ENCODE measurements at regions of chr18 and their contacts with region 1.

Region 1: DNA sequence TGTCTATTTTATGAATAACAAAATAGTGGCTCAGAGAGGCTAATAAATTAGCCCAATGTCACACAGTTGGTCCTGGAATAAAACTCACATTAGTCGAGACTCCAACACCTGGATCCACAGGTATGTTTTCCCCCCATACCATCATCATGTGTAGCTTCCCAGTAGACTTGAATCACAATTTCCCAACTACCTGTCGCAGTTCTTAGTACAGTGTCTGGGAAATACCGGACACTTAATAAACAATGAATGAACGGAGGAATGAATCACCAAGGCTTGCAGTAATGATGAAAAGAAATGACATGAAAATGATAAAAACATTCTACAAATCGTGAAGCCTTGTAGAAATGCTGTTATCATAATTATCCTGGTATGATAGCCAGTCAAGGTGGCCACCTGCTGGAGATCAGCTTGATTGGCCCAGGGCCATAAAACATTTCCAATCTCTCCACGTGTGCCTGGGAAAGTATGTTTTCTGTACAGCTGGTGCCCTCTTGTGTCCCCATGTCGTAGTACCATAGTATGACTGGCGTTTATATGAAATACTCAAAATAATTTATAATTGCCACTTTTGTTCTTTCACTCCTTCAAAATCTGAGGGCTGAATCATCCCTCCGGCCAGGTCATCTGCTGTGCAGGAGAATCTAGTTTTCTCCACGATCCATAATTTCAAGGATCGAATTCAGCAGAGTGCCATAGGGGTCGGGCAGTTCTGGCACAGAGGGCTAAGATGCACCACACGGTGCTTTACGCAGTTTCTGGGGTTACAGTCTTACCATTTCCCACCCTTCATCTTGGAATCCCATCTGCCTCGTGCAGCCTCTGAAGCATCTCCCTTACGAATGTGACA is 95.4 kb downstream of the LAMA1 start:
- DNase-seq: peak; percentile 83
- H3K4me3 ChIP-seq: no peak overlapping the region
- H3K27ac ChIP-seq: no peak overlapping the region
- H3K4me1 ChIP-seq: peaks cover 0 to 2% of the 10 kb centered on the region in 2 experiments; a peak in 1 of 4 replicates
- H3K27me3 ChIP-seq: no peaks in the 10 kb centered on the region
- CTCF ChIP-seq: peak; percentile 44
- EP300 ChIP-seq: no peak
- RAD21 ChIP-seq: peak; percentile 88

Region 2: GRCh38 chr18:5868218-5869115 is 1153.8 kb before region 1 on chr18:
- CTCF ChIA-PET with region 1: interaction called, 11 read pairs
- POLR2A ChIA-PET with region 1: no interaction called
- DNase-seq: peak; percentile 38
- H3K4me3 ChIP-seq: no peak overlapping the region
- H3K27ac ChIP-seq: no peak overlapping the region
- H3K4me1 ChIP-seq: no peaks in the 10 kb centered on the region
- H3K27me3 ChIP-seq: no peaks in the 10 kb centered on the region
- CTCF ChIP-seq: peak; percentile 89
- EP300 ChIP-seq: no peak
- RAD21 ChIP-seq: peak; percentile 85

Region 3: GRCh38 chr18:6920099-6920899 is 101.9 kb before region 1 on chr18:
- CTCF ChIA-PET with region 1: interaction called, 54 read pairs
- POLR2A ChIA-PET with region 1: no interaction called
- DNase-seq: peak; percentile 67
- H3K4me3 ChIP-seq: no peak overlapping the region; a peak in 1 of 4 replicates
- H3K27ac ChIP-seq: no peak overlapping the region
- H3K4me1 ChIP-seq: peaks cover 0 to 5% of the 10 kb centered on the region in 2 experiments; a peak in 1 of 4 replicates
- H3K27me3 ChIP-seq: no peaks in the 10 kb centered on the region
- CTCF ChIP-seq: peak; percentile 54
- EP300 ChIP-seq: no peak
- RAD21 ChIP-seq: peak; percentile 92

Region 4: DNA sequence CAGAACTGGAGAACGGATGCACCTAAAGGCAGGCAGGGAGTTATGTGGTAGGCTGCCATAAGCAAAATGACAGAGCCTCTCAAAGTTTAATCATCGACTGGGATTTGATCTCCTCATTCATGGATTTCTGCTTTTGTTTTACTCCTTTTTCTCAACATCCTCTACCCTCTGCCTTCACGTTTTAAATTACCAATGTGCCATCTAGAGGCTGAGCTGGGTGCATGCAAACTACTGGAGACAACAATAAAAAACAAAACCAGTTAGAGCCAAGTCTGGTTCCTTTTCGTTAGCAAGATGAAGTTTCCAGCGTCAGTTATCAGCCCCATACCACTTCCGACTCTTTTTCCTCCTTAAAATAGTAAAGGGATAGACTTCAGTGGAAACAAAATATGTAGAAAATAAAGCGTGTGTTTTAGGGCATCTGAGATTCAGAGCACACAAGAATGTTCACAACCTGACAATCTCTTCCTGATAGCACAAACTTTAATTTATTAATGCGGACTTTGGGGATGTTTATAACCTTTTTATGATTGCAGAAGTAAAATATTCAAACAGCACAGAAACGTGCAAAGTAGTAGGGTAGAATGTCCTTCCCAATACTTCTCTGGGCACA is 21.6 kb before region 1 on chr18:
- CTCF ChIA-PET with region 1: interaction called, 11 read pairs
- POLR2A ChIA-PET with region 1: no interaction called
- DNase-seq: peak; percentile 59
- H3K4me3 ChIP-seq: no peak overlapping the region
- H3K27ac ChIP-seq: no peak overlapping the region
- H3K4me1 ChIP-seq: no peaks in the 10 kb centered on the region; a peak in 2 of 4 replicates
- H3K27me3 ChIP-seq: no peaks in the 10 kb centered on the region
- CTCF ChIP-seq: peak; percentile 51
- EP300 ChIP-seq: no peak
- RAD21 ChIP-seq: peak; percentile 86

Region 5: DNA sequence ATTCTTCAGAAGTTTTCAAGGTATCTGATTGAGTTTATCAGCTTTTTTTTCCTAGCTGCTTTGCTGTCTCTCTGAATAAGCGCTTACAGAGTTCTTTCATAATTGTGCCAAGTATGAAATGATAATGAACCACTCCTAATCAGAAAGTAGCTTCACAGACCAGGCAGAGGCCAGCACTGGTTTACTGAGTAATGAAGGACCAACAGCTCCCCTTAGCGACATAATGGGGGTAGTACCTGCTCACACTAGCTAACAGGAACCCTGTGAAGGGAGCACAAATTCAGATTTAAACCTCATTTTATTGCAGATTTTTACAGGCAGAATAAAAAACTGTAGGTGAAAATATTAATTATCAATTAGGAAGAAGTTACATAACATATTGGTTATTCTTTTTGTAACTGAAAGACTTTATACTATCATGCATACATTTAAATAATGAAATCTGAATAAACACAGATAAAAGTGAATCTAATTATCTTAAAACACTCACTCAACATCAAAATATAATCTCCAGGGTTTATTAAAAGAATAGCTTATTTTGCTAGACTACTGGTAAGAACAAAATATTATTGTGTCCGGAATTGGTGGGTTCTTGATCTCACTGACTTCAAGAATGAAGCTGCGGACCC is 155.0 kb after region 1 on chr18:
- CTCF ChIA-PET with region 1: interaction called, 14 read pairs
- POLR2A ChIA-PET with region 1: no interaction called
- DNase-seq: peak; percentile 86
- H3K4me3 ChIP-seq: no peak overlapping the region; a peak in 1 of 4 replicates
- H3K27ac ChIP-seq: no peak overlapping the region
- H3K4me1 ChIP-seq: no peaks in the 10 kb centered on the region
- H3K27me3 ChIP-seq: no peaks in the 10 kb centered on the region
- CTCF ChIP-seq: peak; percentile 58
- EP300 ChIP-seq: no peak
- RAD21 ChIP-seq: peak; percentile 91